Panc1 (cell line): ENCODE measurements at regions of chr6 and their contacts with region 1.

Region 1: DNA sequence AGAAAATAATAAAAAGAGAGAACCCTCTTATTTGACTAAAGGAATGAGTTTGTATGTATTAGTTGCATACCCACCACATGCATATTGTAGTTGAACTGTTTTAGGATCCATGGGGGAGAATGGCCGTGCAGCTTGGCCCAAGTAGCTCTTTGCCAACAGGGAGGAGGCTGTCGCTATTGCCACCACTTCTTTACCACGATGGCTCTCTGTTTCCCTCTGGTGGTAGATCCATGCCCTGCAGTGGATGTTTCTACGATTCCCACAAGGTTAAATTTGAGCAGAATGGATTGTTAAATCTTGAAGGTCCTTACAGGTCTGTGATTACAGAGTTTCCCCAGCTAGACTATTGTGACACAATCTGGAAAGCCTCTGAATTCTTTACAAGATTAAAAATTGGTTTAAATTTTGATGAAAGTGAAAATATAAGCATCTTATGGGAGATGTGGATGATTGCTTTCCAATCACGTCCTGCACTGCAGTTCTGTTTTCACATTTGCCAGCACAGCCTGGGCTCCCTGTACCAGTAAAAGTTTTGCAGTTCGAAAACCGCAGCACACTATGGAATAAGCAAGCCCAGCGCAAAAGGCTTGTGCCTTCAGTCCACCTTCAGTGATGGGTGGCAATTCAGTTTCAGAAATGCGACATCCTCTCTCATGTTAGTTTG is 34.4 kb upstream of the FNDC1 start:
- DNase-seq: peak; percentile 74
- ATAC-seq: peak; percentile 91
- H3K4me3 ChIP-seq: no peak overlapping the region
- H3K27ac ChIP-seq: no peak overlapping the region
- H3K4me1 ChIP-seq: no peaks in the 10 kb centered on the region
- H3K27me3 ChIP-seq: peaks cover 12% of the 10 kb centered on the region
- CTCF ChIP-seq: peak; percentile 96

Region 2: GRCh38 chr6:159042003-159042825 is 92.6 kb before region 1 on chr6:
- CTCF ChIA-PET with region 1: interaction called, 4 read pairs
- POLR2A ChIA-PET with region 1: no interaction called
- in situ Hi-C with region 1: no loop called
- intact Hi-C with region 1: loop called (anchors 10 kb)
- DNase-seq: peak; percentile 54
- ATAC-seq: peak; percentile 93
- H3K4me3 ChIP-seq: no peak overlapping the region
- H3K27ac ChIP-seq: no peak overlapping the region
- H3K4me1 ChIP-seq: no peaks in the 10 kb centered on the region
- H3K27me3 ChIP-seq: peaks cover 24% of the 10 kb centered on the region
- CTCF ChIP-seq: peak; percentile 97